AG04450 (cell line): ENCODE measurements at regions of chr11 and their contacts with region 1.

Region 1: DNA sequence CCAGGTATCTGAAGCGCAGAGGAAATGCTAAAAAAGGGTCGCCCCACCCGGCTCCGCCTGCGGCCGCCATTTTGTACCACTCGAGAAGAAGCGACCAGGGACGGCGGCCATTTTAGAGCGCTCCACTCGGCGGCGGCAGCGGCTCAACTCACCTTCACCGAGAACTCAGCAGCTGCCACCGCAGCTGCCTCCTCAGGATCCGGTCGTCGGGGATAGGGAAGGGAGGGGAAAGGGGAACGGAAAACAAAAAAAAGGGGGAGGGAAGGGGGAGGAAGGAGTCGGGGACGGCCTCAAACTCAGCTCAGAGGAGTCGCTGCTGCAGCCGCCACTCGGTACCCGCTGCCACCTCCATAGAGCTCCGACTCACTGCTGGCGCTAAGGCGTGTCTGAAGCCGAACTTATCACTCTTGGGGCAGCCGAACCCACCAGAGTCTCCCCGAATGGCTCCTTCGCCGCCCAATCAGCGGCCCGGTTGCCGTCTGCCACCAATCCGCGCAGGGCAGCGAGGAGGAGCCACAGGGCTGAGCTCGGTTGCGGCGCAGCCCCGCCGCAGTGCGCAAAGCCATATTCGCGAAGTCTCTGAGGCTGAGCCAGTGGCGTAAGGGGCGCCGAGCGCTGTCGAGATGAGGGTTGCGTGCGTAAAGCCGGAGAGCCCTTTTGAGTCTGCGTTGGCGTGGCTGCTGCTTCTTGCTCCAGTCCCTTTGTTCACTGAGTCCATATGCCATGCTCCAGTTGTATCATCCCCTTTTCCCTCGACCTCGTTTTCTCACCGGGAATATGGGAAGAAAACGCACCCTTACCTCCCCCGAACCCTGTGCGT is at the start of gene EIF4G2:
- DNase-seq: peak; percentile 98
- H3K4me3 ChIP-seq: peak within 1 kb of the TSS; percentile 93
- H3K27ac ChIP-seq: peak within 1 kb of the TSS; percentile 98
- H3K27me3 ChIP-seq: no peaks in the 10 kb centered on the region
- CTCF ChIP-seq: no peak
- polyA plus RNA-seq, gene EIF4G2: 1,244 and 1,432 TPM in 2 replicates

Region 2: GRCh38 chr11:10680956-10681487 is 127.7 kb before region 1 on chr11:
- CTCF ChIA-PET with region 1: no interaction called
- POLR2A ChIA-PET with region 1: no interaction called
- DNase-seq: no peak
- H3K4me3 ChIP-seq: no peak overlapping the region
- H3K27ac ChIP-seq: no peak overlapping the region
- H3K27me3 ChIP-seq: no peaks in the 10 kb centered on the region
- CTCF ChIP-seq: no peak

Region 3: DNA sequence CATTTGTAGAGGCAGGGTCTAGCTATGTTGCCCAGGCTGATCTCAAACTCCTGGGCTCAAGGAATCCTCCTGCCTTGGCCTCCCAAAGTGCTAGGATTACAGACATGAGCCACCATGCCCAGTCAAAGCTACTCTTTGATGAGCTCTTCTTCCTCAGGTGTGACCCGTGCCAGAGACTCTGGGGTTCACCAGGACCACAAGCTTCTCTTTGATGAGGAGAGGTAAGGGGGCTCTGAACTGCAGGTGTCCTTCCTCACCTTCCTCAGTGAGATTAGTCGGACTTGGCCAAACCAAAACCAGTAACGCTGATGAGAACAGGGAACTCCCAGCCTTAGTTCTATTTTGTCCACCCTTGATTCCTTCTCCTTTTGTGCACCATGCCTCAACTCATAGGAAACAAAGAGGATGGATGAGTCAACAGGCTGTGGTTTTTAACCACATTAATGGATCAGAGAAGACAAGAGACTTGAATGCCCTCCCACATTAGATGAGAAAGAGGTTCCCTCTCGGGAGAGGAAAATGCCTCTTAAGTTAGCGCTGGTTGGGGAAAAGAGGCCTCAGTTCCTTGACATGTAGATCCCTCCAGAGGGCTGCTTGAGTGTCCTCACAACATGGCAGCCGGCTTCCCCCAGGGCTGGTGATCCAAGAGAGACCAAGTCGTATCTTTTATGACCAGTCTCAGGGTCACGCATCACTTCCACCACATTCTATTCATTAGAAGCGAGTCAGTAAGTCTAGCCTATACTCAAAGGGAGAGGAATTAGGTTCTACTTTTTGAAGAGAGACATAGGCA is 83.5 kb before region 1 on chr11:
- CTCF ChIA-PET with region 1: no interaction called
- POLR2A ChIA-PET with region 1: no interaction called
- DNase-seq: peak; percentile 23
- H3K4me3 ChIP-seq: no peak overlapping the region
- H3K27ac ChIP-seq: no peak overlapping the region
- H3K27me3 ChIP-seq: no peaks in the 10 kb centered on the region
- CTCF ChIP-seq: no peak

Region 4: GRCh38 chr11:10797531-10797930 is 11.2 kb before region 1 on chr11:
- CTCF ChIA-PET with region 1: interaction called, 11 read pairs
- POLR2A ChIA-PET with region 1: interaction called, 32 read pairs
- DNase-seq: no peak
- H3K4me3 ChIP-seq: no peak overlapping the region
- H3K27ac ChIP-seq: no peak overlapping the region
- H3K27me3 ChIP-seq: no peaks in the 10 kb centered on the region
- CTCF ChIP-seq: no peak

Region 5: GRCh38 chr11:10857709-10858438 is 49.1 kb after region 1 on chr11 and contains the start of gene ZBED5:
- CTCF ChIA-PET with region 1: interaction called, 3 read pairs
- POLR2A ChIA-PET with region 1: interaction called, 146 read pairs
- DNase-seq: peak; percentile 91
- H3K4me3 ChIP-seq: peak within 1 kb of the TSS; percentile 92
- H3K27ac ChIP-seq: peak within 1 kb of the TSS; percentile 97
- H3K27me3 ChIP-seq: no peaks in the 10 kb centered on the region
- CTCF ChIP-seq: peak; percentile 25; the same call in 1 of the 2 replicates
- polyA plus RNA-seq, gene ZBED5: 77.5 and 87.7 TPM in 2 replicates

Region 6: DNA sequence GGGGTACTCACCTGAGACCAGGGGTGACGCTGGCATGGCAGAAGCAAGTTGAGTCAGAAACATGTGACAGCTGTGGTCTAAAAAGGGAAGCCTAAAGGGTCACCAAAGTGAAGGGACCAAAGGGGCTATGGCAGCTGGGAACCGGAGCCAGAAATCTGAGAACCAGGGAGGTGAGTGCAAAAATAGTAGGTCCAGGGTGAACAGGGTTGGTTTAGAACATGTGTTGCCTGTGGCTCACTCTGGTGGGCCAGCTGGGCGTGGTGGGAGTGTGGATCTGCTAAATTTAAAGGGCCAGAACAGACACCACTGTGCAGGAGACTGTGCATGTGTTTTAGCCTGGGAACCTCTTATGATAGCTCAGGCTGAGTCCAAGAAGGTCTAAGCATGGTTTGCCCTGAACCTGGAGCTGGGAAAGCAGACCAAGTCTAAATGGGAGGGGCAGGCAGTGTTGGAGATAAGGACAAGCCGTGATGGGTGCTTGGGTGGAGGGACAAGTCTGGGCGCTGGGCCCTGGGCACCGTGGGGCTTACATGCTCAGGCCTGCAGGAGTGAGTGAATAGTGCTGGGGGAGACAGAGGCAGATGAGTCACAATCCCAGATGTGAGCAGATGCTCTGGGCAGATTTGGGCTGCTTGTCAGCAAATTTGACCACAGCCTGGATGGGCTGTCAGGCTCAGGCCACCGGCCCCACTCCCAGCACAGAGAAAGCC is 90.5 kb after region 1 on chr11:
- CTCF ChIA-PET with region 1: interaction called, 3 read pairs
- POLR2A ChIA-PET with region 1: interaction called, 101 read pairs
- DNase-seq: no peak
- H3K4me3 ChIP-seq: peak overlapping the region; percentile 45
- H3K27ac ChIP-seq: peak overlapping the region; percentile 100
- H3K27me3 ChIP-seq: no peaks in the 10 kb centered on the region
- CTCF ChIP-seq: no peak

Region 7: GRCh38 chr11:10926801-10927211 is 118.0 kb after region 1 on chr11:
- CTCF ChIA-PET with region 1: no interaction called
- POLR2A ChIA-PET with region 1: interaction called, 64 read pairs
- DNase-seq: no peak
- H3K4me3 ChIP-seq: no peak overlapping the region
- H3K27ac ChIP-seq: no peak overlapping the region
- H3K27me3 ChIP-seq: no peaks in the 10 kb centered on the region
- CTCF ChIP-seq: no peak